ENCODE measurements at regions of chr2 and their contacts with region 1.

Region 1: GRCh38 chr2:189580658-189581353 is at the start of gene SLC40A1:
- DNase-seq: peak; percentile 90
- H3K4me3 ChIP-seq: peak within 1 kb of the TSS; percentile 58 to 73 (median 64)
- H3K27ac ChIP-seq: peak within 1 kb of the TSS; percentile 83 to 93 (median 86)
- H3K4me1 ChIP-seq: peaks cover 0 to 24% (median 7%) of the 10 kb centered on the region in 4 donors
- H3K27me3 ChIP-seq: no peaks in the 10 kb centered on the region
- CTCF ChIP-seq: no peak
- EP300 ChIP-seq: no peak
- POLR2A ChIP-seq: peak; percentile 55 to 78
- total RNA-seq, gene SLC40A1: 34.9 to 52.1 (median 46.9) TPM

Region 2: GRCh38 chr2:188596054-188596453 is 984.8 kb before region 1 on chr2:
- intact Hi-C with region 1: no loop called
- DNase-seq: no peak
- H3K4me3 ChIP-seq: no peak overlapping the region
- H3K27ac ChIP-seq: no peak overlapping the region
- H3K4me1 ChIP-seq: peaks cover 0 to 17% (median 11%) of the 10 kb centered on the region in 4 donors
- H3K27me3 ChIP-seq: no peaks in the 10 kb centered on the region
- CTCF ChIP-seq: no peak
- EP300 ChIP-seq: no peak
- POLR2A ChIP-seq: no peak

Region 3: DNA sequence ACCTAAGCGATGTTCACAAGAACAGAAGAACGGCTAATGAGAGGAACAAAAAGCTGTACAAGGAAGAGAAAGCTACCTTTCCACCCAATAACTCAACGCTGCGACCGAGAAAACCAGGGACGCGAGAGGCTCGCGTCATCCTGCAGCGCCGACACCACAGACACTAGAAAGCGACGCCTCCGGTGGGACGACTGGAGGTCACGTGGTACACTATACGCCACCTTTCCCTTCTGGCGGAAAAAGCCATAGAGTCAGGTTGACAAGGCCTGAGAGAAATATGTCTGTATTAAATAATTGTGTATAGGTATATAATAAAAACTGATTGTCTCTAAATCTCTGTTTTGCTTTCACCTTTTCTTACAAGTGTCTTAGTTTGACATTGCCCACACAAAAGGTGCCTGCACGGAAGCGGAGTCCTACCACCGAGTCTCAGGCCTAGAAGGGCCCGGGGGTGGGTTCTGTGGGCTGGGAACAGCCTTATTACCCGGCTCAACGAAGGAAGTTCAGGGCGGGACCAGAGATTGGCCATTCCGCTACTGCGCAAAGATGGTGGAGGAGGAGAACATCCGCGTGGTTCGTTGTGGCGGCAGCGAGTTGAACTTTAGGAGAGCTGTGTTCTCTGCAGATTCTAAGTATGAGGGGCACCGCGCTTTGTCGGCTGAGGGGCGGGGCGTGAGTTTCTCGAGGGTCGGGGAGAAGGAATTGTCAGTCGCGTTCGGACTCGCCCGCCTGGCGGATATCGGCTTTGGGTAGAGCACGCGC is 139.7 kb before region 1 on chr2 and contains the start of gene WDR75:
- intact Hi-C with region 1: loop called (anchors 5 kb)
- DNase-seq: peak; percentile 96
- H3K4me3 ChIP-seq: peak within 1 kb of the TSS; percentile 59 to 73 (median 72)
- H3K27ac ChIP-seq: peak within 1 kb of the TSS; percentile 90 to 95 (median 92)
- H3K4me1 ChIP-seq: peaks cover 0 to 30% (median 19%) of the 10 kb centered on the region in 4 donors
- H3K27me3 ChIP-seq: no peaks in the 10 kb centered on the region
- CTCF ChIP-seq: no peak
- EP300 ChIP-seq: no peak
- POLR2A ChIP-seq: peak; percentile 64 to 76
- total RNA-seq, gene WDR75: 25.8 to 43.5 (median 32.4) TPM

Region 4: GRCh38 chr2:189466660-189467059 is 114.1 kb before region 1 on chr2:
- intact Hi-C with region 1: loop called (anchors 5 kb)
- DNase-seq: no peak
- H3K4me3 ChIP-seq: no peak overlapping the region
- H3K27ac ChIP-seq: no peak overlapping the region
- H3K4me1 ChIP-seq: no peaks in the 10 kb centered on the region
- H3K27me3 ChIP-seq: no peaks in the 10 kb centered on the region
- CTCF ChIP-seq: peak in 3 of 4 experiments; percentile 24 to 48 (median 33)
- EP300 ChIP-seq: no peak
- POLR2A ChIP-seq: no peak

Measured in sigmoid colon (tissue), 7 donors.